Esophagus muscularis mucosa (tissue), 4 donors: ENCODE measurements at regions of chr6 and their contacts with region 1.

Region 1: DNA sequence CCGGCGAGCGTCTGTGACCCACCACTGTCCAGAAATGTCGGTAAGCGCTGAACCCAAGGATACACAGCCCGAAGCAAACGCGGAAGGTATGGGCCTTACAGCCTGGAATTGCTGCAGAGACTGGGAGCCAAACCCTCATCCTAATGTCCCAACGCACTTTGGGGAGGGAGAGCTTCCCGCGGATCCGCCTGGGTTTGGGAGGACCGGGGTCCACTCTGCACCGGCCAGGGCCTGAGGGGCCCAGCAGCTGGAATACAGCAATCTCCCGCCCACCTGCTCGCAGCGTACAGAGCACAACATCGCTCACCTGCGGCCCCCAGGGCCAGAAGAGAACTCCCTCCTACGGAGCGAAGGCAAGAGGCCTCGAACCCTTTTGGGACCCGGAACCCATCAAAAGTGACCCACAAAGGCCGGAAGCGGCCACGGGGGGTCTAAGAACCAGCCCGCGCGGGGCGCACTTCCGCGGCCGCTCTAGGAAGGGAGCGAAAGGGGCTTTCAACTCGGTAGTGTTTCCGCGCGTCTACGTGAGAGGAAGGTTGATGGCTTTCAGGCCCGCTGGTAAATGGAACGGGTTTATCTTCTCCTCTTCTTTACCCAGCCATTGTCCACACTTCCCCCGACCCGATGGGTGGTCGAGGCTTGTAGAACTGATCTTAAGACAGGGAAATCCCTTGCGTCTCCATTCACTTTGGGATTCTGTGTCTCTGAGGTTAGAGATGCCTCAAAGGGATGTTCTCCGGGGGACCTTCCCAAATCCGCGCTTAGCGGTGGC is at the start of gene ZSCAN12:
- DNase-seq: peak; percentile 93
- H3K4me3 ChIP-seq: peak within 1 kb of the TSS; percentile 73 to 91 (median 84)
- H3K27ac ChIP-seq: peak within 1 kb of the TSS; percentile 57 to 69 (median 68)
- H3K4me1 ChIP-seq: peaks cover 12 to 39% (median 35%) of the 10 kb centered on the region in 4 donors
- H3K27me3 ChIP-seq: no peaks in the 10 kb centered on the region
- CTCF ChIP-seq: peak; percentile 31 to 53 (median 52)
- EP300 ChIP-seq: no peak
- POLR2A ChIP-seq: no peak
- total RNA-seq, gene ZSCAN12: 4.0 to 5.7 (median 4.6) TPM

Region 2: GRCh38 chr6:27871924-27872638 is 527.5 kb before region 1 on chr6:
- intact Hi-C with region 1: no loop called
- DNase-seq: no peak
- H3K4me3 ChIP-seq: peak overlapping the region; percentile 49 to 63 (median 51)
- H3K27ac ChIP-seq: peak overlapping the region; percentile 16 to 63 (median 56)
- H3K4me1 ChIP-seq: peaks cover 12 to 32% (median 27%) of the 10 kb centered on the region in 4 donors
- H3K27me3 ChIP-seq: peaks cover 0 to 85% (median 51%) of the 10 kb centered on the region in 4 donors
- CTCF ChIP-seq: no peak
- EP300 ChIP-seq: no peak
- POLR2A ChIP-seq: peak; percentile 53

Region 3: GRCh38 chr6:28443112-28443773 is 43.7 kb after region 1 on chr6 and contains the start of gene ZSCAN23:
- intact Hi-C with region 1: loop called (anchors 5 kb)
- DNase-seq: no peak
- H3K4me3 ChIP-seq: peak within 1 kb of the TSS; percentile 61 to 74 (median 66)
- H3K27ac ChIP-seq: peak within 1 kb of the TSS; percentile 56 to 71 (median 63)
- H3K4me1 ChIP-seq: peaks cover 11 to 26% (median 13%) of the 10 kb centered on the region in 4 donors
- H3K27me3 ChIP-seq: peaks cover 0 to 27% (median 12%) of the 10 kb centered on the region in 4 donors
- CTCF ChIP-seq: no peak
- EP300 ChIP-seq: no peak
- POLR2A ChIP-seq: no peak
- total RNA-seq, gene ZSCAN23: 1.0 to 2.9 (median 2.1) TPM

Region 4: GRCh38 chr6:28523241-28523622 is 123.7 kb after region 1 on chr6:
- intact Hi-C with region 1: no loop called
- DNase-seq: peak; percentile 57
- H3K4me3 ChIP-seq: no peak overlapping the region
- H3K27ac ChIP-seq: no peak overlapping the region
- H3K4me1 ChIP-seq: no peaks in the 10 kb centered on the region
- H3K27me3 ChIP-seq: peaks cover 0 to 31% (median 0%) of the 10 kb centered on the region in 4 donors
- CTCF ChIP-seq: no peak
- EP300 ChIP-seq: no peak
- POLR2A ChIP-seq: no peak